Endothelial cell of umbilical vein (primary cell): ENCODE measurements at regions of chr12 and their contacts with region 1.

Region 1: GRCh38 chr12:117874842-117875434 is 93.9 kb downstream of the KSR2 start:
- DNase-seq: peak; percentile 56
- H3K4me3 ChIP-seq: no peak overlapping the region
- H3K27ac ChIP-seq: no peak overlapping the region
- H3K4me1 ChIP-seq: no peaks in the 10 kb centered on the region
- H3K27me3 ChIP-seq: peaks cover 4 to 5% of the 10 kb centered on the region in 2 experiments
- CTCF ChIP-seq: peak; percentile 79 to 83
- POLR2A ChIP-seq: no peak

Region 2: GRCh38 chr12:117724543-117724942 is 150.4 kb before region 1 on chr12:
- CTCF ChIA-PET with region 1: no interaction called
- POLR2A ChIA-PET with region 1: no interaction called
- dilution Hi-C with region 1: no loop called
- intact Hi-C with region 1: no loop called
- DNase-seq: peak; percentile 6
- H3K4me3 ChIP-seq: no peak overlapping the region
- H3K27ac ChIP-seq: no peak overlapping the region
- H3K4me1 ChIP-seq: no peaks in the 10 kb centered on the region
- H3K27me3 ChIP-seq: no peaks in the 10 kb centered on the region
- CTCF ChIP-seq: no peak
- POLR2A ChIP-seq: no peak

Region 3: DNA sequence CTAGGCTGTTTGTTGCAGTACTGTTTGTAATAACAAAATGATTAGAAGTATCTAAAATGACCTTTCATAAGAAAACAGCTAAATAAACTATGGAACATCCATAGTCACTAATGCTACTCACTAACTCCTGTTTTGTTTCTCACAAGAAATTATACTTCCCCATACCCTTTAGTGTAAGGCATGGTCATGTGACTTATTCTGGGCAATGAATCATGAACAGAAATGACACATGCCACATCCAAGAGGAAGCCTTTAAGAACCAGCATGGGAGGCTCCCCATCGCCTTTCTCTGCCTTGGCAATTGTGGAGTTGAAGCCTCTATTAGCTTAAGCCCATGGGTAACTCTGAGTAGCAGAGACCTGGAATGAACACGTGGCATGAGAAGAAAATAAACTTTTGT is 44.5 kb after region 1 on chr12:
- CTCF ChIA-PET with region 1: no interaction called
- POLR2A ChIA-PET with region 1: no interaction called
- dilution Hi-C with region 1: no loop called
- intact Hi-C with region 1: no loop called
- DNase-seq: no peak
- H3K4me3 ChIP-seq: no peak overlapping the region
- H3K27ac ChIP-seq: no peak overlapping the region
- H3K4me1 ChIP-seq: no peaks in the 10 kb centered on the region
- H3K27me3 ChIP-seq: no peaks in the 10 kb centered on the region
- CTCF ChIP-seq: no peak
- POLR2A ChIP-seq: no peak

Region 4: DNA sequence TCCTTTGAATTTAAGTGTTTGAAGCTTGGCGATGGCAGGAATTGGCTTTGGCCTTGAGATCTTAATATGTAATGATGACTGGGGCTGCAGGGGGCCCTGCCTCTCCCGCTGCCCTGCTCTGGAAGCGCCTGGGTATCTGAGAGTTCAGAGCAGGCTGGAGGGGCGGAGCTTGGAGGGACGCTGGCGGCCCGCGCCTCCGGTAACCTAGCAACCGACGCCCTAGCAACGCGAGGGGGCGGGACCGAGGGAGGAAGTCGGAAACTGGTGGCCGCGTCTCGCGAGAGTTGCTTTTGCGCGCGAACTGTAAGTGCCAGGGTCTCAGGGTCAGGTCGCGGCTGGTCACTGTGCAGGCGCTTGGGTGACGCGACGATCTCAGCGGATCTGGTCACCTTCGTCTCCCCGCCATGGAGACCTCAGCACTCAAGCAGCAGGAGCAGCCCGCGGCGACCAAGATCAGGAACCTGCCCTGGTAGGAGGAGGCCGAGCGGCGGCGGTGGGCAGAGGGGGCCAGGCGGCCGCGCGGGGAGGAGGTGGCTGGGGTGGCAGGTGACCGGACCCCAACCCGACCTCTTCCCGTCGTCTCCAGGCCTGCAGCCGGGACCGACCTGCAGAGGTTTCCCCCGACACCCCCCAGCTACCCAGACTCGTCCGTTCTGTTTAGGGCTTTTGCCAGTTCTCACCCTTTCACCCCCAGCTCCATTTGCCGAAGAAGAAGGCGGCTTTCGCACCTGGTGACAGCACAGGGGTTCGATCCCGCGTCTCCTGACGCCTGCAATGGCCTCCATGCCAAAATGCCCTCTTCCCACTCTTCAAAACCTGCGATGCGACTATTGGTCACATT is 141.7 kb after region 1 on chr12 and contains the start of gene RFC5:
- CTCF ChIA-PET with region 1: interaction called, 6 read pairs
- POLR2A ChIA-PET with region 1: no interaction called
- dilution Hi-C with region 1: no loop called
- intact Hi-C with region 1: loop called (anchors 1 kb)
- DNase-seq: peak; percentile 98
- H3K4me3 ChIP-seq: peak within 1 kb of the TSS; percentile 67 to 94 (median 81)
- H3K27ac ChIP-seq: peak within 1 kb of the TSS; percentile 32
- H3K4me1 ChIP-seq: peaks cover 9% of the 10 kb centered on the region
- H3K27me3 ChIP-seq: peaks cover 2 to 4% of the 10 kb centered on the region in 2 experiments
- CTCF ChIP-seq: no peak
- POLR2A ChIP-seq: peak; percentile 36
- total RNA-seq, gene RFC5: 23.3 and 24.8 TPM in 2 replicates

Region 5: GRCh38 chr12:118035246-118036041 is 160.5 kb after region 1 on chr12:
- CTCF ChIA-PET with region 1: interaction called, 50 read pairs
- POLR2A ChIA-PET with region 1: no interaction called
- dilution Hi-C with region 1: no loop called
- intact Hi-C with region 1: loop called (anchors 1 kb)
- DNase-seq: peak; percentile 26
- H3K4me3 ChIP-seq: no peak overlapping the region
- H3K27ac ChIP-seq: no peak overlapping the region
- H3K4me1 ChIP-seq: peaks cover 12% of the 10 kb centered on the region
- H3K27me3 ChIP-seq: no peaks in the 10 kb centered on the region
- CTCF ChIP-seq: peak; percentile 12 to 29
- POLR2A ChIP-seq: no peak

Region 6: DNA sequence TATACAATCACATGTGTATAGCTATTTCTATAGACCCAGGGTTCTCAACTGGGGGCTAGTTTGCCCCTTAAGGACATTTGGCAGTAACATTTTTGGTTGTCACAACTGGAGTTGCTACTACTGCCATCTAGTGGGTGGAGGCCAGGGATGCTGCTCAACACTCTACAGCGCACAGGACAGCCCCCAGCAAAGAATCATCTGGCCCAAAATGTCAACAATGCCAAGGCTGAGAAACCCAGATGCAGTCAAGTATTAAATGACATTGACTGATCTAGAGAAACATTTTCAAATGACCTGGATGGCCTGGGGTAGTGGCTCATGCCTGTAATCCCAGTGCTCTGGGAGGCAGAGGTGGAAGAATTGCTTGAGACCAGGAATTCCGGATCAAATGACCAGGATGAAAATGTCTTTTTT is 180.2 kb after region 1 on chr12:
- CTCF ChIA-PET with region 1: interaction called, 4 read pairs
- POLR2A ChIA-PET with region 1: no interaction called
- dilution Hi-C with region 1: no loop called
- intact Hi-C with region 1: loop called (anchors 2 kb)
- DNase-seq: peak; percentile 61
- H3K4me3 ChIP-seq: no peak overlapping the region
- H3K27ac ChIP-seq: no peak overlapping the region
- H3K4me1 ChIP-seq: peaks cover 36% of the 10 kb centered on the region
- H3K27me3 ChIP-seq: no peaks in the 10 kb centered on the region
- CTCF ChIP-seq: peak; percentile 58 to 68
- POLR2A ChIP-seq: no peak

Region 7: GRCh38 chr12:118103604-118104382 is 228.9 kb after region 1 on chr12 and contains the start of gene VSIG10:
- CTCF ChIA-PET with region 1: interaction called, 6 read pairs
- POLR2A ChIA-PET with region 1: no interaction called
- dilution Hi-C with region 1: no loop called
- intact Hi-C with region 1: loop called (anchors 1 kb)
- DNase-seq: peak; percentile 74
- H3K4me3 ChIP-seq: peak within 1 kb of the TSS; percentile 48 to 78 (median 52)
- H3K27ac ChIP-seq: peak within 1 kb of the TSS; percentile 61
- H3K4me1 ChIP-seq: peaks cover 11% of the 10 kb centered on the region
- H3K27me3 ChIP-seq: no peaks in the 10 kb centered on the region
- CTCF ChIP-seq: no peak
- POLR2A ChIP-seq: no peak
- total RNA-seq, gene VSIG10: 38.4 and 38.6 TPM in 2 replicates

Region 8: DNA sequence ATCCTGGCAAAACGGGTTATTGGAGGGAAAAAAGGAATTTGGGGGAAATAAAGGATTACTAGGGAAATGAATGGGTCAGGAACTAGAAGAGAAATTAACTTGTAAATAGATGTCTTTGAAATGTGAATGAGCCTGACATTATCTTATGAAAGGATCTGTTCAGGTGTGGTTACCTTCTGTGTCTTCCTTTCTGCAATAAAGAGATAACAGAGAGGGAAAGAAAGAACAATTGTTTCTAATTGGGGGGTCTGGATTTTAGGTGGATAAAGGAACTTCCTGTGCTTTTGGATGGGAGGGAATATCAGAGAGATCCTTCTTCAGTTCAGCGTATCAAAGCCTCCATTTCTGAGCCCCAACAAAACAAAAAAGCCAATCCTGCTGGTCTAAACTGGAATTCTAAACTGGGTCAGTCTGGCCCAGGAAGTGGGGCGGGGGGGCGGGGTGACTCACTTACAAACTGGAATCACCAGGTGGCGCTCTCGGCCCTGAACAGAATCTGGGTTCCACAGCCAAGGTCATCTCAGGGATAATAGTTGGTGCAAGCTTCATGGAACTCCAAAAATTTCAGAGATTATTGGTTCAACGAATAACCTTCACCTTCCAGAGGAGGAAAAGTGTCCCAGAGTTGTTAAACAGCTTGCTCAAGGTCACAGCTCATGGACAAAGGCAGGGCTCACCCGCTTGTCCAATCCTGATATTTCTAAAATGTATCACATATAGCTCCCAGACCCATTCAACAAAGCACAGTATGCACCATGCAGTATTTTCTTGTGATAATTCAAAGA is 245.8 kb after region 1 on chr12:
- CTCF ChIA-PET with region 1: interaction called, 11 read pairs
- POLR2A ChIA-PET with region 1: no interaction called
- dilution Hi-C with region 1: no loop called
- intact Hi-C with region 1: no loop called
- DNase-seq: peak; percentile 52
- H3K4me3 ChIP-seq: no peak overlapping the region
- H3K27ac ChIP-seq: peak overlapping the region; percentile 24
- H3K4me1 ChIP-seq: no peaks in the 10 kb centered on the region
- H3K27me3 ChIP-seq: no peaks in the 10 kb centered on the region
- CTCF ChIP-seq: peak; percentile 22 to 67
- POLR2A ChIP-seq: no peak

Region 9: GRCh38 chr12:118135788-118136558 is 261.0 kb after region 1 on chr12 and contains the start of gene PEBP1:
- CTCF ChIA-PET with region 1: interaction called, 10 read pairs
- POLR2A ChIA-PET with region 1: no interaction called
- dilution Hi-C with region 1: no loop called
- intact Hi-C with region 1: loop called (anchors 5 kb)
- DNase-seq: peak; percentile 94
- H3K4me3 ChIP-seq: peak within 1 kb of the TSS; percentile 48 to 82 (median 75)
- H3K27ac ChIP-seq: peak within 1 kb of the TSS; percentile 49
- H3K4me1 ChIP-seq: peaks cover 4% of the 10 kb centered on the region
- H3K27me3 ChIP-seq: no peaks in the 10 kb centered on the region
- CTCF ChIP-seq: no peak
- POLR2A ChIP-seq: peak; percentile 91
- total RNA-seq, gene PEBP1: 146 and 185 TPM in 2 replicates